Ascending aorta (tissue), 2 donors: ENCODE measurements at regions of chr19 and their contacts with region 1.

Region 1: GRCh38 chr19:6862673-6863078 is 24.7 kb upstream of the ADGRE1 start:
- DNase-seq: peak; percentile 46 to 89
- H3K4me3 ChIP-seq: peak overlapping the region; percentile 24 to 59
- H3K27ac ChIP-seq: no peak overlapping the region
- H3K4me1 ChIP-seq: no peaks in the 10 kb centered on the region
- H3K27me3 ChIP-seq: no peaks in the 10 kb centered on the region
- CTCF ChIP-seq: peak; percentile 64 to 80 (median 76)

Region 2: GRCh38 chr19:6516659-6517291 is 345.9 kb before region 1 on chr19:
- intact Hi-C with region 1: loop called (anchors 5 kb)
- DNase-seq: peak; percentile 31 to 90
- H3K4me3 ChIP-seq: peak overlapping the region; percentile 46 to 73
- H3K27ac ChIP-seq: peak overlapping the region in 1 of 2 donors; percentile 53
- H3K4me1 ChIP-seq: peaks cover 0 to 4% of the 10 kb centered on the region in 2 donors
- H3K27me3 ChIP-seq: no peaks in the 10 kb centered on the region
- CTCF ChIP-seq: peak; percentile 85 to 98 (median 91)

Region 3: DNA sequence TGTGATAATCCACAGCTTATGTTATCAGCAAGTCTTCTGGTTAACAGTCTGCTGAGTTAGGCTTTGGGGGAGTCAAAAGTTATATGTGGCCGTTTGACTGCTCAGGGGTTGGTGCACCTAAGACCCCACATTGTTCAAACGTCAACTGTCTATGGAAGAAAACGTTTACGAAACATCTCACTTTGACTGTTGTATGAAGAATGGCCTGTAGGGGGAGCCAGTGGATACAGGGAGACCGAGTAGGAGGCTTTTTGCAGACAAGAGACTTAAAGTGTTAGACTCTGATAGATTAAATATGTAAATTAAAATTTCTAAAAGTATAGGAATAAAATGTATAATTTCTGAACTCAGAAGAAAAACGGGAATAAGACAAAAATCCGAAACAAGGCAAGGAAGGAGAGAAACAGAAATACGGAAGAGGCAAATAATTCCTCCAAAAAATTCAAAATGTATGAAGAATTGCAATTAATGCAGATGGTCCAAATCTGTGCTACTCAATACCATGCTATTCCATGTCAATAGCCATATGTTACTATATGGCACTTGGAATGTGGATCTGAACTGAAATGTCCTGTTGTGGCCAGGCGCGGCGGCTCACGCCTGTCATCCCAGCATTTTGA is 230.6 kb before region 1 on chr19:
- intact Hi-C with region 1: loop called (anchors 2 kb)
- DNase-seq: peak in 1 of 2 donors; percentile 84
- H3K4me3 ChIP-seq: no peak overlapping the region
- H3K27ac ChIP-seq: no peak overlapping the region
- H3K4me1 ChIP-seq: no peaks in the 10 kb centered on the region
- H3K27me3 ChIP-seq: no peaks in the 10 kb centered on the region
- CTCF ChIP-seq: peak; percentile 57 to 84 (median 73)

Region 4: DNA sequence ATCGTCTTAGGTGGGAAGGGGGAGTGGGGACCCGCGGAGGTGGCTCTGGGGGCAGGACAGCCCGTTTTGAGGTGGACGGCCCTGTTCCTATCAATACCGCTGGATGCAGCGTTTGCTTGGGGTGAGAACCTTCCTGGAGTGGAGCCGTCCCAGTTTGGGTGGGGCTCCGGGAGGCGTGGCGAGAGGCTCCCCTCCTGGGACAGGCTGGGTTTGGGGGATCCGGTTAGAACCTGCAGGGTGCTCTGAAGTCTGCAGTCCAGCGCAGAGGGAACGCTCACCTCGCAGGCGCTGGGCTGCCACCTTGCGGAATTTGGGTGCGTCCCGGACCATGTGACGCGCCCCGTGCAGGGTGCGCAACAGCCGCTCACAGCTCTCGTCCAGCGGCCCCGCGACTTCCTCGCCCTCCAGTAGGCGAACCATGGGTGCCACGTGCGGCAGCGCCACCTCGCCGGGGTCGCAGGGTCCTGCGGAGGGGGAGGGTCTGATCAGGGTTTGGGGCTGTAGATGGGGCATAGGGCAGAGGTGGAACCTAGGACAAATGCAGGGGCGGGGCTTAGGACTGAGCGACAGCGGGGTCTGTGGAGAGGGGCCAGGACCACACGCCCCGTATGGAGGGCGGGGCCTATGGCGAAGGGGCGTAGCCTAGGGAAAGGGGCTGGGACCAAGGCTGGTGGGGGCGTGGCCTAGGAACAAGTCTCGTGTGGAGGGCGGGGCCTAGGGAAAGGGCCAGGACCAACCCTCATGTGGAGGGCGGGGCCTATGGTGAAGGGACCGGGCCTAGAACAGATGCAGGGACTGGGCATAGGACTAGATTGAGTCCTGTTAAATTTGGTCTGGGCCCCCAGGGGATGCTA is 109.3 kb before region 1 on chr19:
- intact Hi-C with region 1: loop called (anchors 5 kb)
- DNase-seq: peak in 1 of 2 donors; percentile 88
- H3K4me3 ChIP-seq: peak overlapping the region; percentile 51 to 57
- H3K27ac ChIP-seq: peak overlapping the region; percentile 29 to 43
- H3K4me1 ChIP-seq: peaks cover 0 to 8% of the 10 kb centered on the region in 2 donors
- H3K27me3 ChIP-seq: no peaks in the 10 kb centered on the region
- CTCF ChIP-seq: peak; percentile 48 to 66 (median 54)

Region 5: GRCh38 chr19:6822311-6822670 is 40.4 kb before region 1 on chr19:
- intact Hi-C with region 1: no loop called
- DNase-seq: no peak
- H3K4me3 ChIP-seq: no peak overlapping the region
- H3K27ac ChIP-seq: no peak overlapping the region
- H3K4me1 ChIP-seq: no peaks in the 10 kb centered on the region
- H3K27me3 ChIP-seq: no peaks in the 10 kb centered on the region
- CTCF ChIP-seq: no peak

Region 6: GRCh38 chr19:6886277-6886897 is 23.7 kb after region 1 on chr19:
- intact Hi-C with region 1: no loop called
- DNase-seq: no peak
- H3K4me3 ChIP-seq: no peak overlapping the region
- H3K27ac ChIP-seq: no peak overlapping the region
- H3K4me1 ChIP-seq: no peaks in the 10 kb centered on the region
- H3K27me3 ChIP-seq: no peaks in the 10 kb centered on the region
- CTCF ChIP-seq: no peak